ENCODE measurements at regions of chr3 and their contacts with region 1.

Region 1: DNA sequence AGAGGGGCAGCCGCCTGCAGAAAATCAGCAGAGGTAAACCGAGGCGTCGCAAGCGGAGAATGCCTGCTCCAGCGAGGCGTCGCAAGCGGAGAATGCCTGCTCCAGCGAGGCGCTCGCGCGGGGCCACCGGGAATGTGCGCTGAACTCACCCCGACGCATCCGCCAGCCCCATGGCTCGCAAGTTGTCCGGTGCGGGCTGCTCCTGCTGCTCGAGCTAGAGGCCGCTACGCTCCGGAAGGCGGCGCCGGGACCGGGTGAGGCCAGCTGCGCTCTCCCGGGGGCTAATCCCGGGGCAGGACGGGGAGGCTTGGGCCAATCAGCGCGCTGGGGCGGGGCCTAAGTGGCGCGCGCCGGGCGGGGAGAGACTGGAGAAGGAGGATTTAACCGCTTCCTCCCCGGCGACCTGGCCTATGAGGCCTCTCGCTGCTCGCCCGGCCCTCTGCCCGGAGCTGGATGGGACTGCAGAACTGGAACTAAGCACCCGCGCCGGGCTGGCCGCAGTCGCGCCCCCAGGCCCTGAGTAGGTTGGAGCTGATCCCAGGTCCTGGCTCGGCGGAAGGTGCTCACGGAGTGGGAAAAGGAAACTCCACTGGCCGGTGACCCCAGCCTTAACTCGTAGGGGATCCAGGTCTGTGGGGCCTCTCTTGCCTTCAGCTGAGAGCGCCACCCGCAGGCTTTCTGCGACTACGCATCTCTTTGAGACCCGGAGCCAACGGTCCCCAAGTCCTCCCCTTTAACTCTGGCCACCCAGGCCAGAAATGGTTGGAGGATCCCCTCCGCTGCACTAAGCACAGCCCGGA is at the start of gene SLC26A6:
- DNase-seq: peak; percentile 98
- ATAC-seq: peak; percentile 99
- total RNA-seq, gene SLC26A6: 11.2 to 14.6 TPM

Region 2: GRCh38 chr3:48514436-48515227 is 120.8 kb before region 1 on chr3:
- intact Hi-C with region 1: no loop called
- DNase-seq: no peak
- ATAC-seq: no peak

Region 3: GRCh38 chr3:48656061-48656840 is 20.8 kb after region 1 on chr3:
- intact Hi-C with region 1: loop called in 1 of 2 experiments (anchors 1 kb)
- DNase-seq: peak; percentile 89
- ATAC-seq: peak; percentile 89 to 94

Region 4: GRCh38 chr3:48898383-48899234 is 263.2 kb after region 1 on chr3 and contains the start of gene SLC25A20:
- intact Hi-C with region 1: no loop called
- DNase-seq: peak; percentile 95
- ATAC-seq: peak; percentile 99
- total RNA-seq, gene SLC25A20: 53.4 to 55.6 TPM

Measured in left cardiac atrium (tissue), 4 donors.